ENCODE measurements at regions of chr3 and their contacts with region 1.

Region 1: DNA sequence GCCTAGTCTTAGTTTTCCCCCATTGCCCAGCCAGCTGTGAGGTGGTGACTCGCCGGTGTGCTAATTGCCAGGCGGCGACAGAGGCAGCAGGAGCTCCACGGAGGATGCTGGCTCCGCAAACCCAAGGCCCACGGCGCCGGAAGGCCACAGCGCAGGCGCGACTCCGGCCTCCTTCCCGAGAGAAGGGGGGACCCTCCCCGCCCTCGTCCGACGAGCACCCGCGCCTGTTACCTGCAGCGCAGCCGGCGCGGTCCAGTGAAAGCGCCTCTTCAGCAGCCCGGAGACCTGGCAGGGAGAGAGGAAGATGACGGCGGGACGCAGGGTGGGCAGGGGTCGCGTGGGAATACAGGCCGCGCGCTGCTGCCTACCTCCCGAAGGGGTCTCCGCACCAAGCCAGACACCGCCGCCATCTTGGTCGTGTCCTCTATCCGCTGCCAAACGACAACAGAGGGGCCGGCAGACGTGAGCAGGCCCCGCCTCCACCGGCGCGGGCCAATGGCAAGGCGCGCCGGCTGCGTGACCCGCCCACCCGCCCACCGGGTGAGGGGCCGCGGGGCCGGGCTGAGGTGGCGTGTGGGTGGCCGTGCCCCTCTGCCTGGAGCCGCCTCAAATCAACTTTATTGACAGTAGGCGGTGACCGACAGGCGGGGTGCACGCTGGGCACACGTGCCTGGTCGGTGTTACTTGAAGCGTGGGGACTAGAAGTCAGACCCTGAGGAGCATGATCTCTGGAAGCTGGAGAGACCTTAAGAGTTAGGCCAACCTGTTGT is at the start of gene PDHB:
- DNase-seq: peak; percentile 93
- ATAC-seq: peak; percentile 96
- H3K4me3 Mint-ChIP-seq: peak within 1 kb of the TSS; percentile 85
- H3K27ac Mint-ChIP-seq: peak within 1 kb of the TSS; percentile 96
- H3K4me1 Mint-ChIP-seq: peaks cover 24% of the 10 kb centered on the region
- H3K27me3 Mint-ChIP-seq: no peaks in the 10 kb centered on the region
- total RNA-seq, gene PDHB: 42.7 to 50.7 TPM

Region 2: GRCh38 chr3:57597122-57597923 is 836.3 kb before region 1 on chr3 and contains the start of gene ARF4:
- CTCF ChIA-PET with region 1: no interaction called
- POLR2A ChIA-PET with region 1: no interaction called
- intact Hi-C with region 1: loop called in 1 of 2 experiments (anchors 5 kb)
- DNase-seq: peak; percentile 99
- ATAC-seq: peak; percentile 94
- H3K4me3 Mint-ChIP-seq: peak within 1 kb of the TSS; percentile 98
- H3K27ac Mint-ChIP-seq: peak within 1 kb of the TSS; percentile 99
- H3K4me1 Mint-ChIP-seq: peaks cover 30% of the 10 kb centered on the region
- H3K27me3 Mint-ChIP-seq: no peaks in the 10 kb centered on the region
- total RNA-seq, gene ARF4: 49.6 to 50.0 TPM

Region 3: GRCh38 chr3:58177747-58178527 is 255.6 kb before region 1 on chr3:
- CTCF ChIA-PET with region 1: no interaction called
- POLR2A ChIA-PET with region 1: no interaction called
- intact Hi-C with region 1: loop called in 1 of 2 experiments (anchors 5 kb)
- DNase-seq: peak; percentile 95
- ATAC-seq: peak; percentile 86
- H3K4me3 Mint-ChIP-seq: peak overlapping the region; percentile 61
- H3K27ac Mint-ChIP-seq: peak overlapping the region; percentile 31
- H3K4me1 Mint-ChIP-seq: peaks cover 13% of the 10 kb centered on the region
- H3K27me3 Mint-ChIP-seq: peaks cover 4% of the 10 kb centered on the region

Region 4: DNA sequence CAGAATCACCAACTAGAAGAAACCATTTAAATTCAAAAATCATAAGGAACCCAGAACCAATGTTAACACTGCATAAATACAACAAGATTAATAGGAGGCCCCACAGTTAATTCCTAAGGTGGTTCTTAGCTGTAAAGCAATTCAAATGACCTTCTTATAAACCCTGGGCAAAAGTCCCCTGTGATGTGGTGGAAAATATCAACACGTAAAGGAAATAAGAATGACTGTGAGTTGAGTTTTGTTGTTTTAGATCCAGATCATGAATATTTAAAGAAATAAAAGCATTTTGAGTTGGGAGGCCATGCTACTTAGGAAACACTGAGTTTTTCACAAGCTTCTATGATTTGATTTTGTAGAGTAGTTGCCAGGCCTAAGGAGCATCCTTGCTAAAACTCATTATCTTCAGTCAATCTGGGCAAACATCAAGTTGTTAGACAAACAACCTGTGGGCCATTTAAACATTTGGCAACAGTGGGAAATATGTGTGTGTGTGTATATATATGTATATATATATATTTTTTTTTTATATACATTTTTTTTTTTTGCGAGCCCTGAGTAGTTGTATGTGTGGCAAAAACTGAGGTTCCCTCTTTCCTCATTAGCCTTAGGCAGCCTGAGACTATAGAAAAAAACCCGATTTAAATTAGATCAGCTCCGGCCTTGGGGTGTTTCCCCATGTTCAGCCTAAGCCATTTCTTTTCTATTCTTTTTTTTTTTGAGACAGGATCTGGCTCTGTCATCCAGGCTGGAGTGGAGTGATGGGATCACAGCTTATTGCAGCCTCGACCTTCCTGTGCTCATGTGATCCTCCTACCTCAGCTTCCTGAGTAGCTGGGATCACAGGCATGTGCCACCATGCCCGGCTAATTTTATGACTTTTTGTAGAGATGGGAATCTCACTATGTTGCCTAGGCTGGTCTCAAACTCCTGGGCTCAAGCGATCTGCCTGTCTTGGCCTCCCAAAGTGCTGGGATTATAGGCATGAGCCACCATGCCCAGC is 108.9 kb before region 1 on chr3:
- CTCF ChIA-PET with region 1: interaction called, 3 read pairs
- POLR2A ChIA-PET with region 1: no interaction called
- intact Hi-C with region 1: loop called in 1 of 2 experiments (anchors 1 kb)
- DNase-seq: no peak
- ATAC-seq: peak; percentile 62
- H3K4me3 Mint-ChIP-seq: peak overlapping the region; percentile 29
- H3K27ac Mint-ChIP-seq: peak overlapping the region; percentile 86
- H3K4me1 Mint-ChIP-seq: peaks cover 40% of the 10 kb centered on the region
- H3K27me3 Mint-ChIP-seq: no peaks in the 10 kb centered on the region

Region 5: GRCh38 chr3:58463181-58463941 is 29.8 kb after region 1 on chr3:
- CTCF ChIA-PET with region 1: interaction called, 8 read pairs
- POLR2A ChIA-PET with region 1: interaction called, 4 read pairs
- intact Hi-C with region 1: loop called in 1 of 2 experiments (anchors 1 kb)
- DNase-seq: peak; percentile 91
- ATAC-seq: peak; percentile 97
- H3K4me3 Mint-ChIP-seq: no peak overlapping the region
- H3K27ac Mint-ChIP-seq: peak overlapping the region; percentile 25
- H3K4me1 Mint-ChIP-seq: peaks cover 14% of the 10 kb centered on the region
- H3K27me3 Mint-ChIP-seq: no peaks in the 10 kb centered on the region

Region 6: DNA sequence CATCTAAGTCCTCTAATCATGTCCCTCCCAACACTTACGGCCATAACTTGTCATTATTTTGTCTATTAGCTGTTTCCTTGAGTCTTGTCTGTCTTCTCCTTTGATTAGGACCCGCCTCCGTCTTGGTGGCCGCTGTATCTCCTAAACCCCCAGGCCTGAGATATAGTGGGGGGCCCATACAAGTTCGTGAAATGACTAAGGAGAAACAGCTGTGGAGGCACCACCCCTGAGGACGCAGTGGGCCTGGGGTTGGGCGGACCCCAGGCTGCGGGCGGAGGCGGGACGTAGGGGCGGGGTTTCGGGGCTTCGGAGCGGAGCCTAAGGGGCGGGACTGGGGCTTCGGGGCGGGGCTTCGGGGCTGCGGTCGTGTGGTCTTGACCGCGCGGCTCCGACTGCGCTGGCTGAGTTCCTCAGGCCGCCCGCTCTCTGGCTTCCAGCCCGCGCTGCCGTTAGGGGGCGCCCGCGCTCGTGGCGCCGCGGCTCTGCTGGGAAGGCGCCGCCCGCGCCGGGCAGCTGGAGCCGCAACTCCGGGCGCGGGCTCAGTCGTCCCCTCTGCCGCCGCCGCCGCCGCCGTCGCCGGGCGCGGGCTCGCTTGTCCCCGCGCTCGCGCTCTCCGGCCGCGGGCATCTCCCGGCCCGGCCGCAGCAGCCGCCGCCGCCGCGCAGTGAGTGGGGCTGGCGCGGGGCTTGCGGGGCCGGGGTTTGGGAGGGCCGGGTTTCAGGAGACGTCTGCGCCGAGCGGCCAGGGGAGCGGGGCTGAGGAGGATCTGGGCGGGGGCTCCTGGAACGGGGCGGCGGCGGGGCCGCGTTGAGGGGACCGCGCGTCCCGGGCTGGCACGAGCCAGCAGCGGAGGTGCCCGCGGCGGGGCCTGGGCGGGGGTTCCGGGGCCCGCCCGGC is 58.2 kb after region 1 on chr3 and contains the start of gene KCTD6:
- CTCF ChIA-PET with region 1: interaction called, 8 read pairs
- POLR2A ChIA-PET with region 1: no interaction called
- intact Hi-C with region 1: loop called (anchors 1 to 2 kb)
- DNase-seq: peak; percentile 91
- ATAC-seq: peak; percentile 90
- H3K4me3 Mint-ChIP-seq: peak within 1 kb of the TSS; percentile 84
- H3K27ac Mint-ChIP-seq: peak within 1 kb of the TSS; percentile 90
- H3K4me1 Mint-ChIP-seq: peaks cover 45% of the 10 kb centered on the region
- H3K27me3 Mint-ChIP-seq: peaks cover 6% of the 10 kb centered on the region
- total RNA-seq, gene KCTD6: 7.1 to 7.9 TPM

Measured in activated CD4-positive, alpha-beta T cell treated with anti-CD3 and anti-CD28 coated beads for 36 hours (primary cell).